Sigmoid colon (tissue), 7 donors: ENCODE measurements at regions of chr18 and their contacts with region 1.

Region 1: GRCh38 chr18:7038330-7038851 is 79.2 kb downstream of the LAMA1 start:
- DNase-seq: peak; percentile 96
- H3K4me3 ChIP-seq: peak overlapping the region in 3 of 4 donors; percentile 19 to 34 (median 25)
- H3K27ac ChIP-seq: peak overlapping the region; percentile 60 to 77 (median 67)
- H3K4me1 ChIP-seq: peaks cover 0 to 5% (median 4%) of the 10 kb centered on the region in 4 donors
- H3K27me3 ChIP-seq: no peaks in the 10 kb centered on the region
- CTCF ChIP-seq: peak; percentile 60 to 75 (median 72)
- EP300 ChIP-seq: peak in 3 of 4 donors; percentile 67 to 90 (median 87)
- POLR2A ChIP-seq: no peak

Region 2: GRCh38 chr18:6980363-6980762 is 58.0 kb before region 1 on chr18:
- intact Hi-C with region 1: no loop called
- DNase-seq: no peak
- H3K4me3 ChIP-seq: no peak overlapping the region
- H3K27ac ChIP-seq: no peak overlapping the region
- H3K4me1 ChIP-seq: peaks cover 0 to 3% (median 0%) of the 10 kb centered on the region in 4 donors
- H3K27me3 ChIP-seq: no peaks in the 10 kb centered on the region
- CTCF ChIP-seq: no peak
- EP300 ChIP-seq: no peak
- POLR2A ChIP-seq: no peak

Region 3: GRCh38 chr18:7177116-7177744 is 138.8 kb after region 1 on chr18:
- intact Hi-C with region 1: loop called (anchors 1 kb)
- DNase-seq: peak; percentile 74
- H3K4me3 ChIP-seq: no peak overlapping the region
- H3K27ac ChIP-seq: no peak overlapping the region
- H3K4me1 ChIP-seq: no peaks in the 10 kb centered on the region
- H3K27me3 ChIP-seq: peaks cover 0 to 5% (median 0%) of the 10 kb centered on the region in 3 donors
- CTCF ChIP-seq: peak in 3 of 4 experiments; percentile 49 to 76 (median 68)
- EP300 ChIP-seq: no peak
- POLR2A ChIP-seq: no peak